Naive thymus-derived CD8-positive, alpha-beta T cell (primary cell): ENCODE measurements at regions of chr6 and their contacts with region 1.

Region 1: DNA sequence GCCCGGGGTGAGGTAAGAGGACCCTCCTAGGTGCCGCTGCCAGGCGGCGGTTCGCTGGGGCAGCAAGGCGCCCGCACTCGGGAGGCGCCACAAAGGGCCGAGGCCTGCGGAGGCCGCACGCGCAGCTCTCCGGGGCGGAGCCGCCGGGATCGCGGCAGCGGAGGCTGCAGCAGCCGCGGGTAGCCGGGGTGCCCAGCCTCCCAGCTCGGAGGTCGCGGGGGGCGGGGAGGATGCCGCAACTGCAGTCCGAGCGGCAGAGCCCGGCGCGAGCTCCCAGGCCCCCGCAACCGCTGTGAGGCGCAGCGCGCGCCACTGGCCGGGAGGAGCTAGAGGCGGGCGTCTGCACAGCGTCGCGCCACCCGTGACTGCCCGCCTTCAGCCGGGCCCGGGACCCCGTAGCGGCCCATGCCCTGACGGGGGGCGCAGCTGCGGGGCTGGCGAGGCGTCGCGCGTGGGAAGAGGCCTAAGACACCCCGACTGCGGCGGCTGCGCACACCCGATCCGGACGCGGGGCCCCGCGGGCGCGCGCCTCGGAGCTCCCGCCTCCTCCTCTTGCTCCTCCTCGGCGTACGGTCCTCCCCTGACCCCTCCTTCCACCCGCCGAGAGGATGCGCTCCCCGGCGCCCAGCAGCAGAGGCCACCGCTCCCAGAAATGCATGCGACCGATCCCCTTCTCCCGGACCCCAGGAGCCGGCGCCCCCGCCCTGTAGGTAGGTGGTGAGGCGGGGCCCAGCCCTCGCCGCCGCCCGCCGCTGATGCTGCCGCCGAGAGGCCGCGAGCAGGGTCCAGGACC is at the start of gene NCOA7:
- DNase-seq: peak; percentile 72 to 89 (median 78)
- ATAC-seq: peak; percentile 77 to 79
- H3K4me3 Mint-ChIP-seq: peak within 1 kb of the TSS; percentile 87 to 97 (median 94)
- H3K27ac Mint-ChIP-seq: peak within 1 kb of the TSS; percentile 96 to 99 (median 98)
- H3K4me1 Mint-ChIP-seq: peaks cover 17 to 54% (median 40%) of the 10 kb centered on the region in 4 donors
- H3K27me3 Mint-ChIP-seq: no peaks in the 10 kb centered on the region
- polyA plus RNA-seq, gene NCOA7: 9.4 to 16.5 (median 13.5) TPM

Region 2: GRCh38 chr6:125749173-125749864 is 41.2 kb before region 1 on chr6 and contains the start of gene HEY2:
- POLR2A ChIA-PET with region 1: interaction called, 19 read pairs
- DNase-seq: peak; percentile 65 to 86 (median 74)
- ATAC-seq: peak; percentile 65 to 69
- H3K4me3 Mint-ChIP-seq: peak within 1 kb of the TSS; percentile 87 to 95 (median 92)
- H3K27ac Mint-ChIP-seq: peak within 1 kb of the TSS; percentile 57 to 91 (median 79)
- H3K4me1 Mint-ChIP-seq: peaks cover 17 to 42% (median 35%) of the 10 kb centered on the region in 4 donors
- H3K27me3 Mint-ChIP-seq: peaks cover 18 to 46% (median 34%) of the 10 kb centered on the region in 5 donors
- polyA plus RNA-seq, gene HEY2: 0.18 to 0.32 (median 0.27) TPM

Region 3: DNA sequence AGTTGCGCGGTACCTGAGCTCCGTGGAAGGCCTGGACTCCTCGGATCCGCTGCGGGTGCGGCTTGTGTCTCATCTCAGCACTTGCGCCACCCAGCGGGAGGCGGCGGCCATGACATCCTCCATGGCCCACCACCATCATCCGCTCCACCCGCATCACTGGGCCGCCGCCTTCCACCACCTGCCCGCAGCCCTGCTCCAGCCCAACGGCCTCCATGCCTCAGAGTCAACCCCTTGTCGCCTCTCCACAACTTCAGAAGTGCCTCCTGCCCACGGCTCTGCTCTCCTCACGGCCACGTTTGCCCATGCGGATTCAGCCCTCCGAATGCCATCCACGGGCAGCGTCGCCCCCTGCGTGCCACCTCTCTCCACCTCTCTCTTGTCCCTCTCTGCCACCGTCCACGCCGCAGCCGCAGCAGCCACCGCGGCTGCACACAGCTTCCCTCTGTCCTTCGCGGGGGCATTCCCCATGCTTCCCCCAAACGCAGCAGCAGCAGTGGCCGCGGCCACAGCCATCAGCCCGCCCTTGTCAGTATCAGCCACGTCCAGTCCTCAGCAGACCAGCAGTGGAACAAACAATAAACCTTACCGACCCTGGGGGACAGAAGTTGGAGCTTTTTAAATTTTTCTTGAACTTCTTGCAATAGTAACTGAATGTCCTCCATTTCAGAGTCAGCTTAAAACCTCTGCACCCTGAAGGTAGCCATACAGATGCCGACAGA is 31.2 kb before region 1 on chr6:
- POLR2A ChIA-PET with region 1: no interaction called
- DNase-seq: no peak
- ATAC-seq: peak in 1 of 2 donors; percentile 37
- H3K4me3 Mint-ChIP-seq: peak overlapping the region in 1 of 10 donors; percentile 27
- H3K27ac Mint-ChIP-seq: no peak overlapping the region
- H3K4me1 Mint-ChIP-seq: peaks cover 0 to 4% (median 0%) of the 10 kb centered on the region in 4 donors
- H3K27me3 Mint-ChIP-seq: peaks cover 8 to 31% (median 21%) of the 10 kb centered on the region in 5 donors

Region 4: GRCh38 chr6:125834348-125834747 is 43.8 kb after region 1 on chr6:
- POLR2A ChIA-PET with region 1: interaction called, 12 read pairs
- DNase-seq: peak in 2 of 10 donors; percentile 5 to 21
- ATAC-seq: peak; percentile 61 to 63
- H3K4me3 Mint-ChIP-seq: peak overlapping the region in 5 of 10 donors; percentile 2 to 41 (median 15)
- H3K27ac Mint-ChIP-seq: peak overlapping the region in 5 of 10 donors; percentile 0 to 89 (median 29)
- H3K4me1 Mint-ChIP-seq: peaks cover 15 to 65% (median 44%) of the 10 kb centered on the region in 4 donors
- H3K27me3 Mint-ChIP-seq: no peaks in the 10 kb centered on the region

Region 5: GRCh38 chr6:125986300-125987025 is 195.9 kb after region 1 on chr6 and contains the start of gene TRMT11:
- POLR2A ChIA-PET with region 1: interaction called, 39 read pairs
- DNase-seq: peak; percentile 66 to 91 (median 78)
- ATAC-seq: peak; percentile 93 to 98
- H3K4me3 Mint-ChIP-seq: peak within 1 kb of the TSS in 6 of 10 donors; percentile 4 to 54 (median 36)
- H3K27ac Mint-ChIP-seq: peak within 1 kb of the TSS in 3 of 10 donors; percentile 13 to 26 (median 17)
- H3K4me1 Mint-ChIP-seq: peaks cover 2 to 18% (median 11%) of the 10 kb centered on the region in 4 donors
- H3K27me3 Mint-ChIP-seq: no peaks in the 10 kb centered on the region
- polyA plus RNA-seq, gene TRMT11: 9.4 to 16.1 (median 9.9) TPM